Ovary (tissue), 10 donors: ENCODE measurements at regions of chr19 and their contacts with region 1.

Region 1: GRCh38 chr19:41206926-41207750 is 11.9 kb upstream of the AXL start:
- DNase-seq: no peak
- H3K4me3 ChIP-seq: no peak overlapping the region
- H3K27ac ChIP-seq: no peak overlapping the region
- H3K4me1 ChIP-seq: peaks cover 3% of the 10 kb centered on the region
- H3K27me3 ChIP-seq: no peaks in the 10 kb centered on the region
- CTCF ChIP-seq: no peak
- EP300 ChIP-seq: no peak
- POLR2A ChIP-seq: no peak

Region 2: DNA sequence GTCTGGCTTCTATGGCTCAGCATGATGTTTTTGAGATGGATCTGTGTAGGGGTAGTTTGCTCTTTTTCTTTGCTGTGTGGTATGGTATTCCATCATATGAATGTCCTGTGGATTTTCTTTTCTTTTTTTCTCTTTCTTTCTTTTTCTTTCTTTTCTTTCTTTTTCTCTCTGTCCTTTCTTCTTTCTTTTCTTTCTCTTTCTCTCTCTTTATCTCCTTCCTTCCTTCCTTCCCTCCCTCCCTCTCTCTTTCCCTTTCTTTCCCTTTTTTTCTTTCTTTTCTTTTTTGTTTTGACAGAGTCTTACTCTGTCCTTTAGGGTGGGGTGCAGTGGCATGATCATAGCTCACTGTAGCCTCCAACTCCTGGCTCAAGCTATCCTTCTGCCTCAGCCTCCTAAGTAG is 48.0 kb after region 1 on chr19:
- intact Hi-C with region 1: loop called in 3 of 4 experiments (anchors 5 to 10 kb)
- DNase-seq: no peak
- H3K4me3 ChIP-seq: no peak overlapping the region
- H3K27ac ChIP-seq: no peak overlapping the region
- H3K4me1 ChIP-seq: no peaks in the 10 kb centered on the region
- H3K27me3 ChIP-seq: no peaks in the 10 kb centered on the region
- CTCF ChIP-seq: no peak
- EP300 ChIP-seq: no peak
- POLR2A ChIP-seq: no peak

Region 3: DNA sequence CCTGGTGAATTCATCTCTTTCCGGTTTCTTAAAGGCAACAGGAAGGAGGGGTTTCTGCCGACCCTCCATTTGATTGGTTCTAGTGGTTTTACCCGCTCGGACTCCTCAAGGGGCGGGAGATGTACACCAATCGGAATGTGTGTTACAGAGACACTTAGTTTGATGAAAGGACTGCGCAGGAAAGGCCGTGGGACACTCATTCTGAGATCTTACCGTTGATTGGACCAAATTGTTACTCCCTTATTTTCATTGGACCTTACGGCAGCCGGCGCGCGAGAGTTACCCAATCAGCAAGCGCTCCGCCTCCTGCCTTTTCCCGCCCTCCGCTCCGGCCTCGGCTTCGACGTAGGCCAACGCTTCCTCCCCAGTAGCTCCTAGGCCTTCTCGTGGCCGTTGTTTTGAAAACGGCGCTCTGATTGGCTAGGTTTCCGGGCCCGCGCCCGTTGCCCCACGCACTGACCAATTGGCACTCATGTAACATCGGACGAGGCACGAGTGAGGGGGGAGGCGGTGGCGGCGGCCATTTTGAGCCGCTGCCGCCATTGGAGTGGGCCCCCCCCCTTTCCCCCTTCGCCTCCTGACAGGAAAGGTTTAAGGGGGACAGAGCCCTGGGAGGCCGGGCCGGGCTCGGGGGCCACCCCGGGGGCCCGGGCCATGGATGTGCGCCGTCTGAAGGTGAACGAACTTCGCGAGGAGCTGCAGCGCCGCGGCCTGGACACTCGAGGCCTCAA is 56.9 kb after region 1 on chr19 and contains the start of gene HNRNPUL1:
- intact Hi-C with region 1: loop called (anchors 1 to 10 kb)
- DNase-seq: peak; percentile 99 to 100 (median 99)
- H3K4me3 ChIP-seq: peak within 1 kb of the TSS; percentile 100
- H3K27ac ChIP-seq: peak within 1 kb of the TSS; percentile 95 to 96
- H3K4me1 ChIP-seq: peaks cover 3% of the 10 kb centered on the region
- H3K27me3 ChIP-seq: no peaks in the 10 kb centered on the region
- CTCF ChIP-seq: peak in 1 of 3 donors; percentile 56
- EP300 ChIP-seq: peak; percentile 3
- POLR2A ChIP-seq: peak; percentile 48
- total RNA-seq, gene HNRNPUL1: 102 to 259 (median 223) TPM

Region 4: DNA sequence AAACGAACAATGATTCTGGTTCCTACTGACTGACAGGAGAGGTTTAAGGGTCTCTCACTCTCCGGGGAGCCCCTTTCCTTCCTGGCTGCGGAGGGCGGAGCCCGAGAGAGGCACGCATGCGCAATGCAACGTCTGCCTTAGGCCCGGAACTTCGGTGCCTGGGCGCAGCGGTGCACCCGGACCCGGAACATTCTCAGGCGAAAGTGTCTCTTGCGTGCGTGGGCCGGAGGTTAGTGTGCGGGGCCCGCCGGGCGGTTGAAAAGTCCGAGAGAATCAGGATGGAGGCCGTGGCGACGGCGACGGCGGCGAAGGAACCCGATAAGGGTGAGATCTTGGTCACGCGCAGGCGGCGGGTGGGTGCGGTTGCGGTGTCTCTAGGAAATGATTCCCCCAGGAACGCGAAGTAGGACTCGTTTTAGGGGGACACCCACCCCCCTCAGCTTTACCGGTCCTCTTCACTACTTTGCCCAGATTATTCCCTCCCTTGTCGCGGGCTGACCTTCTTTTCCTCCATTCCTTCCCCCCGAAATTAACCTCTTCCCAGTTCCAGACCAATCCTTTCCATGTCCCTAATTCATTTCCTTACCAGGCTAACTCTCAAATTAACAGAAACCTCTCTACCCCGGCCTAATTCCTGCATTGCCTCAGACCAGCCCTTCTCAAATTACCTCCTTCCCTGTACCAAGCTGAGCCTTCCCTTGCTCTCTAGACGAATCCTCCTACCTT is 103.1 kb after region 1 on chr19 and contains the start of gene CCDC97:
- intact Hi-C with region 1: loop called in 3 of 4 experiments (anchors 5 kb)
- DNase-seq: peak; percentile 87 to 93 (median 90)
- H3K4me3 ChIP-seq: peak within 1 kb of the TSS; percentile 83
- H3K27ac ChIP-seq: peak within 1 kb of the TSS; percentile 89 to 95
- H3K4me1 ChIP-seq: no peaks in the 10 kb centered on the region
- H3K27me3 ChIP-seq: no peaks in the 10 kb centered on the region
- CTCF ChIP-seq: peak in 1 of 3 donors; percentile 22
- EP300 ChIP-seq: no peak
- POLR2A ChIP-seq: peak; percentile 59
- total RNA-seq, gene CCDC97: 12.8 to 46.1 (median 32.1) TPM